Activated naive CD8-positive, alpha-beta T cell treated with anti-CD3 and anti-CD28 coated beads, Interleukin-2, amount 10 ng/mL, durations not matched to agents 7 days and 5 days (primary cell): ENCODE measurements at regions of chr1 and their contacts with region 1.

Region 1: GRCh38 chr1:54310439-54311328 is 95.5 kb downstream of the SSBP3 start:
- DNase-seq: no peak
- ATAC-seq: peak; percentile 62
- H3K4me3 Mint-ChIP-seq: peak overlapping the region; percentile 70
- H3K27ac Mint-ChIP-seq: peak overlapping the region; percentile 91
- H3K4me1 Mint-ChIP-seq: peaks cover 64% of the 10 kb centered on the region
- H3K27me3 Mint-ChIP-seq: no peaks in the 10 kb centered on the region

Region 2: GRCh38 chr1:54406339-54407153 is 95.9 kb after region 1 on chr1 and contains the start of gene SSBP3:
- POLR2A ChIA-PET with region 1: interaction called, 12 read pairs
- DNase-seq: peak; percentile 97
- ATAC-seq: peak; percentile 89
- H3K4me3 Mint-ChIP-seq: peak within 1 kb of the TSS; percentile 91
- H3K27ac Mint-ChIP-seq: peak within 1 kb of the TSS; percentile 84
- H3K4me1 Mint-ChIP-seq: peaks cover 65% of the 10 kb centered on the region
- H3K27me3 Mint-ChIP-seq: no peaks in the 10 kb centered on the region
- total RNA-seq, gene SSBP3: 109 to 126 TPM